ENCODE measurements at regions of chr5 and their contacts with region 1.

Region 1: DNA sequence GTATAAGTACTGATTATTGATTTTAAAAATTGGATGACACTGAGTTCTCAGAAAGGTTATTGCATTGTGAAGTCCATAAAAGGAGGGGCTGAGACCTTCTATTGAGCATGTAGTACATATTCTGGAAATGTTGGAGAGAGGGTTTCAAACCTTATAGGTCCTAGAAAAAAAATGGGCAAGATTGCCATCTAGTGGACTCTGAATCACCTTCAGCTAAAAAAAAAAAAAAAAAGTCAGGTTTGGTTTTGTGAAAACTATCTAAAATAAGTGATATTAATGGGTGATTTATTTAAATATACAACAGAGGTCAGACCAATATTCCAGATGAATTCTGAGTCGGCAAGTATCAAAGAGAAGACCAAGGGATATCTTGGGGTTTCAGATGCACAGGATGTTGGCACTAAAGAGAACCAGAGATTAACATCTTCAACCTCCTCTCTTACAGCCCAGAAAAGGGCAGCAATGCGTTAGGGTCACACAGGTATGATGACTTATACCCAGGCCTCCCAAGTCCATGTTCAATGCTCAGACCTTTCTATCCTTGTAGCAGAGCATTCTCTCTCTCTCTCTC is 109.8 kb upstream of the NMUR2 start:
- DNase-seq: peak in 2 of 4 experiments; percentile 17 to 32
- ATAC-seq: peak; percentile 56; the same call in 2 of the 3 replicates
- H3K4me3 ChIP-seq: no peak overlapping the region
- H3K27ac ChIP-seq: no peak overlapping the region
- H3K4me1 ChIP-seq: no peaks in the 10 kb centered on the region
- H3K27me3 ChIP-seq: no peaks in the 10 kb centered on the region
- CTCF ChIP-seq: peak in 2 of 3 experiments; percentile 22 to 43; a peak in 2 of 6 replicates
- EP300 ChIP-seq: no peak
- POLR2A ChIP-seq: no peak
- RAD21 ChIP-seq: no peak; a peak in 1 of 4 replicates

Region 2: DNA sequence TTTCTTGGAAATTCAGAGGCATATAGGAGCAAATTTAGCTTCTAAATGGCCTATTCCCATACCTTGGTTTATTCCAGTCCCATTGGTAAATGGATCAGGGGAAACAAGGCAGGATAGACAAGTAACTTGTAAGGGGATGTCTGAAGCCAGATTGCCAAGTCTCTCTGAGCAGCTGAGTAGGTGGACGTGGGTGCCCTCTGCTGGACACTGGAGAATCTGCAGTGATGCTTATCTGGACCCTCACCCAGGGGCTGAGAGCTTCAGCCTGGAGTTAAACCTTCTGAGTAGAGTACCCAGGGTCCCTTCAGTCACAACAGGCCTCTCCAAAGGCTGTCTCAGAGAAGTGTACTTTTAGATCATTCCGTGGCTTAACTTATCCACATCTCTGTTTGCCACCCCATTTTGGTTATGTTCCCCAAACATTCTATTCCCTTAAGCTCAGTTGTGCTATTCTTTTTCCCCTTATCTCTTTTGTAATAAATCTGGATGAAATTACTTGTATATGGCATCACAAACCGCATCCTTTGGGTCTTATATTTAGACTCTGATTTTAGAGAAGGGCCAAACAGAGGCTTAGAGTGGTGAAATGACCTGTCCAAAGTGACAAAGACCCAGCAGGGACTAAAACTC is 372.0 kb before region 1 on chr5:
- CTCF ChIA-PET with region 1: interaction called, 5 read pairs
- POLR2A ChIA-PET with region 1: no interaction called
- in situ Hi-C with region 1: no loop called
- intact Hi-C with region 1: loop called (anchors 5 kb)
- DNase-seq: peak; percentile 70 to 78 (median 73)
- ATAC-seq: peak; percentile 98
- H3K4me3 ChIP-seq: no peak overlapping the region
- H3K27ac ChIP-seq: no peak overlapping the region
- H3K4me1 ChIP-seq: no peaks in the 10 kb centered on the region
- H3K27me3 ChIP-seq: no peaks in the 10 kb centered on the region
- CTCF ChIP-seq: peak; percentile 69 to 91 (median 76)
- EP300 ChIP-seq: no peak
- POLR2A ChIP-seq: no peak
- RAD21 ChIP-seq: peak; percentile 42 to 66; a peak in 3 of 4 replicates

Region 3: GRCh38 chr5:152246407-152246806 is 268.5 kb before region 1 on chr5:
- CTCF ChIA-PET with region 1: no interaction called
- POLR2A ChIA-PET with region 1: no interaction called
- in situ Hi-C with region 1: no loop called
- intact Hi-C with region 1: no loop called
- DNase-seq: peak in 2 of 4 experiments; percentile 12 to 20
- ATAC-seq: no peak
- H3K4me3 ChIP-seq: no peak overlapping the region
- H3K27ac ChIP-seq: no peak overlapping the region
- H3K4me1 ChIP-seq: no peaks in the 10 kb centered on the region
- H3K27me3 ChIP-seq: no peaks in the 10 kb centered on the region
- CTCF ChIP-seq: no peak
- EP300 ChIP-seq: no peak
- POLR2A ChIP-seq: no peak
- RAD21 ChIP-seq: no peak

Measured in K562 (cell line).